ENCODE measurements at regions of chr13 and their contacts with region 1.

Region 1: GRCh38 chr13:109243311-109243951 is 543.0 kb downstream of the IRS2 start:
- DNase-seq: peak in 4 of 5 donors; percentile 18 to 68 (median 54)
- ATAC-seq: peak; percentile 95 to 97 (median 96)
- H3K4me3 ChIP-seq: no peak overlapping the region
- H3K27ac ChIP-seq: peak overlapping the region; percentile 46 to 90 (median 77)
- H3K4me1 ChIP-seq: peaks cover 0 to 24% (median 3%) of the 10 kb centered on the region in 12 donors
- H3K27me3 ChIP-seq: no peaks in the 10 kb centered on the region
- CTCF ChIP-seq: no peak
- POLR2A ChIP-seq: no peak

Region 2: DNA sequence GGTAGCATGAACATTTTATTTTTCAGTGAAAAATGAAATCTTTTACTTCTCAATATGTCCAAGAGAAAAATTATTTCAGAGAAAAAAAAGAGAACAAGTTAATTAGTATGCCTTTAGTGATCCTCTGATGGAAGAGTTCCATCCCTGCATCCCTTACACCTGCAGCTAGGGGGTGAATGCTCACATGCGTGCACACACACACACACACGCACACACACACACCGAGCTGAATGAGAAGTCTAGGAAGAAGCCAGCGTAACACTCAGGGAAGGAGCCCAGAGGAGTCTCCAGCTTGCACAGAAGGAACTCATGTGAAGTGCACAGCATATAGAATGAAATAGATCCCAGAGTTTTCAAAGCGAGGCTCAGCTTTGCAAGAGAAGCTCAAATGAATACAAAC is 32.4 kb after region 1 on chr13:
- intact Hi-C with region 1: loop called in 1 of 10 experiments (anchors 2 kb)
- DNase-seq: no peak
- ATAC-seq: no peak
- H3K4me3 ChIP-seq: no peak overlapping the region
- H3K27ac ChIP-seq: no peak overlapping the region
- H3K4me1 ChIP-seq: peaks cover 0 to 11% (median 3%) of the 10 kb centered on the region in 12 donors
- H3K27me3 ChIP-seq: no peaks in the 10 kb centered on the region
- CTCF ChIP-seq: peak in 1 of 12 donors; percentile 4
- POLR2A ChIP-seq: no peak

Measured in heart left ventricle (tissue), 16 donors.